OCI-LY7 (cell line): ENCODE measurements at regions of chr13 and their contacts with region 1.

Region 1: GRCh38 chr13:100514788-100515409 is 73.7 kb downstream of the GGACT start:
- DNase-seq: peak; percentile 39
- H3K4me3 ChIP-seq: no peak overlapping the region
- H3K27ac ChIP-seq: no peak overlapping the region
- H3K4me1 ChIP-seq: no peaks in the 10 kb centered on the region
- CTCF ChIP-seq: peak; percentile 82

Region 2: GRCh38 chr13:99442273-99442895 is 1072.5 kb before region 1 on chr13:
- CTCF ChIA-PET with region 1: no interaction called
- POLR2A ChIA-PET with region 1: no interaction called
- intact Hi-C with region 1: loop called (anchors 10 kb)
- DNase-seq: peak; percentile 48
- H3K4me3 ChIP-seq: no peak overlapping the region
- H3K27ac ChIP-seq: no peak overlapping the region
- H3K4me1 ChIP-seq: no peaks in the 10 kb centered on the region
- CTCF ChIP-seq: peak; percentile 78

Region 3: DNA sequence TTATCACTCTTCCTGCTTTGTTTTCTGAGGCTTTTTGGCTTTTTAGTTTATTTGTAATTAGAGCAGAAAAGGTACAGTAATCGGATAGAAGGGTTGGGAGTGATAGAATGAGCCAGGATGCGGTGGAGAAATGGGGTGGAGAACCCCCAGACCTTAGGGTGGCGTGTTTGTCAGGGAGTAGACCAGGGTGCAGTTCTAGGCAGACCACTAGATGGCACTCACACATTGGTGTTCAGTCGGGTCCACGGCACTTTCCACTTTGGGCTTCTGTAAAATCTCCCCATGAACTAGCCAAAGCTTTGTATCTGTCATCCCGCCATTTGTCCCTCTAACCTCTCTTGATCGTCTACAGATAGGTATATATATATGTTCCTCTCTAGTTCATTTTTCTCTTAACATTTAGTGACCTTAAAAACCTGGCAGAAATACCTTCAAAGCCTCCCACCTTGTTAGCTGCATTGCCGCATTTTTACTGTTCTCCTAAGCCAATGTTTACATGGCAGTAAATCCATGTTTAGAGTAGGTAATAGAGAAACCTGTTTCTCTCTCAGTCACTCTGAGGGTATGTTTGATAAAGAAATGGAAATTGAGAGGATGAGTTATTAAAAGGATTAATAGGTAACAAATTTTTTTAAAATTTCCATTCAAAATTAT is 858.7 kb before region 1 on chr13:
- CTCF ChIA-PET with region 1: no interaction called
- POLR2A ChIA-PET with region 1: no interaction called
- intact Hi-C with region 1: loop called (anchors 10 kb)
- DNase-seq: peak; percentile 45
- H3K4me3 ChIP-seq: no peak overlapping the region
- H3K27ac ChIP-seq: no peak overlapping the region
- H3K4me1 ChIP-seq: no peaks in the 10 kb centered on the region
- CTCF ChIP-seq: peak; percentile 82

Region 4: GRCh38 chr13:99916366-99917103 is 598.4 kb before region 1 on chr13:
- CTCF ChIA-PET with region 1: no interaction called
- POLR2A ChIA-PET with region 1: no interaction called
- intact Hi-C with region 1: loop called (anchors 2 kb)
- DNase-seq: peak; percentile 30
- H3K4me3 ChIP-seq: no peak overlapping the region
- H3K27ac ChIP-seq: no peak overlapping the region
- H3K4me1 ChIP-seq: no peaks in the 10 kb centered on the region
- CTCF ChIP-seq: peak; percentile 81